CD4-positive, alpha-beta memory T cell (primary cell): ENCODE measurements at regions of chr12 and their contacts with region 1.

Region 1: GRCh38 chr12:27434673-27435565 is 11.6 kb upstream of the SMCO2 start:
- DNase-seq: peak in 4 of 5 donors; percentile 11 to 18 (median 13)
- H3K4me3 ChIP-seq: no peak overlapping the region
- H3K4me3 Mint-ChIP-seq: no peak overlapping the region
- H3K27ac ChIP-seq: no peak overlapping the region
- H3K27ac Mint-ChIP-seq: peak overlapping the region in 1 of 7 donors; percentile 54
- H3K4me1 ChIP-seq: no peaks in the 10 kb centered on the region
- H3K4me1 Mint-ChIP-seq: peaks cover 2 to 13% (median 6%) of the 10 kb centered on the region in 4 donors
- H3K27me3 ChIP-seq: no peaks in the 10 kb centered on the region
- H3K27me3 Mint-ChIP-seq: peaks cover 8 to 15% of the 10 kb centered on the region in 2 donors

Region 2: GRCh38 chr12:27424631-27425230 is 10.2 kb before region 1 on chr12:
- CTCF ChIA-PET with region 1: interaction called, 27 read pairs
- POLR2A ChIA-PET with region 1: no interaction called
- intact Hi-C with region 1: no loop called
- DNase-seq: no peak
- H3K4me3 ChIP-seq: no peak overlapping the region
- H3K4me3 Mint-ChIP-seq: no peak overlapping the region
- H3K27ac ChIP-seq: no peak overlapping the region
- H3K27ac Mint-ChIP-seq: no peak overlapping the region
- H3K4me1 ChIP-seq: no peaks in the 10 kb centered on the region
- H3K4me1 Mint-ChIP-seq: peaks cover 1 to 3% (median 2%) of the 10 kb centered on the region in 4 donors
- H3K27me3 ChIP-seq: no peaks in the 10 kb centered on the region
- H3K27me3 Mint-ChIP-seq: no peaks in the 10 kb centered on the region

Region 3: DNA sequence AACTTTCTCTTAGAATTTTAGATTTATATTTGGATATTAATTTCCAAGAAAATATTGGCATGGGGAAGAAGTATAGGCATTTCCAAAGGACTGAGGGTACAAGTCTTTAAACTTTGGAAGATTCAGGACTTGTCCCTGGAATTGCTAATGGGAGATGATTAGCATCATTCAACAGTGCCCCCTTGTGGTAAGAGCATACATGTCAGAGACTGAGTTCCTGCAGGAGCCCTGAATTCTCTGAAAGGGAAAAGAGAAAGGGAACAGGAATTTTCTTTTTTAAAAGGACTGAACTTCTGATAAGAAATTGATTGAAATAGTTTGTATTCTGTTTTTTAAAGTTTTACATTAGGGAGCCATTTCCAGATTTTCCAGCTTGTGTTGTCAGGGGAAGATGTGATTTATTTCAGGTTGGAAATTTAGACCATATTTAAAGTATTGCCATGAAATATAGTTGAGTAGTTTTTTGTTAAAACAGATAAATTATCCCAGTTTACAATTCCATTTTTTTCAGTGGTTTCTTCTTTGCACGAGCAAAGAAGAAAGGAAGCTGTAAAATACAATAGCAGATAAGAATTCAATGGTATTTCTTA is 217.3 kb after region 1 on chr12:
- CTCF ChIA-PET with region 1: interaction called, 11 read pairs
- POLR2A ChIA-PET with region 1: no interaction called
- intact Hi-C with region 1: loop called (anchors 1 kb)
- DNase-seq: peak; percentile 18 to 32 (median 27)
- H3K4me3 ChIP-seq: no peak overlapping the region
- H3K4me3 Mint-ChIP-seq: no peak overlapping the region
- H3K27ac ChIP-seq: no peak overlapping the region
- H3K27ac Mint-ChIP-seq: no peak overlapping the region
- H3K4me1 ChIP-seq: no peaks in the 10 kb centered on the region
- H3K4me1 Mint-ChIP-seq: peaks cover 0 to 2% (median 0%) of the 10 kb centered on the region in 4 donors
- H3K27me3 ChIP-seq: no peaks in the 10 kb centered on the region
- H3K27me3 Mint-ChIP-seq: no peaks in the 10 kb centered on the region

Region 4: DNA sequence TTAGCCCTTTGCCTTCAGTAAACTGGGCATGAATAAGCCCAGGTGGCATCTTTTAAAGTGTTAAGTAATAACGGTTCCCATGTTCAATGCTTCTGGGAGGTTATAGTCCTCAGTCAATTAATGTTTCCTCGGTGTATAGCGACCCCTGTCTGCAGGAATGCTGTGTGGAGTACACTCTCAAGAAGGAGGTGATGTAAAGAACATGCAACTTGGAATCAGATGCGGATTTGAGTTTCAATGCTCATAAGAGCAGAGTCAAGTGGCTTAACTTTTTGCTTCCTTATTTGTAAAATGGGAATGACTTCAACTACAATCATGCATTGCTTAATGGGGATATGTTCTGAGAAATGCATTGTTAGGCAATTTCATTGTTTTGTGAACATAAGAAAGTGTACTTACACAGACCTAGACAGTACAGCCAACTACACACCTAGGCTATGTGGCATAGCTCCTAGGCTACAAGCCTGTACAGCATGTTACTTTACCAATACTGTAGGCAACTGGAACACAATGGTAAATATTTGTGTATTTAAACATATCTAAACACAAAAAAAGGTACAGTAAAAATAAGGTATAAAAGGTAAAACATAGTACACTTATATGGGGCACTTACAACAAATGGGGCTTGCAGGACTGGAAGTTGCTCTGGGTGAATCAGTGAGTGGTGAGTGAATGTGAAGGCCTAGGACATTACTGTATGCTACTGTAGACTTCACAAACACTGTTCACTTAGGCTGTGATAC is 269.0 kb after region 1 on chr12:
- CTCF ChIA-PET with region 1: interaction called, 65 read pairs
- POLR2A ChIA-PET with region 1: no interaction called
- intact Hi-C with region 1: loop called (anchors 1 kb)
- DNase-seq: peak; percentile 52 to 68 (median 58)
- H3K4me3 ChIP-seq: no peak overlapping the region
- H3K4me3 Mint-ChIP-seq: no peak overlapping the region
- H3K27ac ChIP-seq: no peak overlapping the region
- H3K27ac Mint-ChIP-seq: peak overlapping the region in 1 of 7 donors; percentile 47
- H3K4me1 ChIP-seq: no peaks in the 10 kb centered on the region
- H3K4me1 Mint-ChIP-seq: peaks cover 0 to 3% (median 0%) of the 10 kb centered on the region in 4 donors
- H3K27me3 ChIP-seq: no peaks in the 10 kb centered on the region
- H3K27me3 Mint-ChIP-seq: peaks cover 2 to 7% of the 10 kb centered on the region in 2 donors

Region 5: GRCh38 chr12:27723212-27723611 is 288.3 kb after region 1 on chr12:
- CTCF ChIA-PET with region 1: no interaction called
- POLR2A ChIA-PET with region 1: no interaction called
- intact Hi-C with region 1: no loop called
- DNase-seq: no peak
- H3K4me3 ChIP-seq: no peak overlapping the region
- H3K4me3 Mint-ChIP-seq: no peak overlapping the region
- H3K27ac ChIP-seq: no peak overlapping the region
- H3K27ac Mint-ChIP-seq: peak overlapping the region in 1 of 7 donors; percentile 66
- H3K4me1 ChIP-seq: no peaks in the 10 kb centered on the region
- H3K4me1 Mint-ChIP-seq: peaks cover 3 to 9% (median 4%) of the 10 kb centered on the region in 4 donors
- H3K27me3 ChIP-seq: no peaks in the 10 kb centered on the region
- H3K27me3 Mint-ChIP-seq: no peaks in the 10 kb centered on the region